ENCODE measurements at regions of chrX and their contacts with region 1.

Region 1: GRCh38 chrX:154748712-154749343 is 2.0 kb downstream of the GAB3 start:
- H3K4me3 Mint-ChIP-seq: peak overlapping the region; percentile 42
- H3K27ac Mint-ChIP-seq: no peak overlapping the region
- H3K4me1 Mint-ChIP-seq: peaks cover 6% of the 10 kb centered on the region
- H3K27me3 Mint-ChIP-seq: no peaks in the 10 kb centered on the region

Region 2: GRCh38 chrX:154428176-154429010 is 320.4 kb before region 1 on chrX and contains the start of gene ATP6AP1:
- intact Hi-C with region 1: no loop called
- H3K4me3 Mint-ChIP-seq: peak within 1 kb of the TSS; percentile 81
- H3K27ac Mint-ChIP-seq: peak within 1 kb of the TSS; percentile 89
- H3K4me1 Mint-ChIP-seq: peaks cover 41% of the 10 kb centered on the region
- H3K27me3 Mint-ChIP-seq: no peaks in the 10 kb centered on the region

Region 3: GRCh38 chrX:154714925-154715324 is 33.9 kb before region 1 on chrX:
- intact Hi-C with region 1: loop called (anchors 5 kb)
- H3K4me3 Mint-ChIP-seq: no peak overlapping the region
- H3K27ac Mint-ChIP-seq: no peak overlapping the region
- H3K4me1 Mint-ChIP-seq: peaks cover 58% of the 10 kb centered on the region
- H3K27me3 Mint-ChIP-seq: no peaks in the 10 kb centered on the region

Region 4: DNA sequence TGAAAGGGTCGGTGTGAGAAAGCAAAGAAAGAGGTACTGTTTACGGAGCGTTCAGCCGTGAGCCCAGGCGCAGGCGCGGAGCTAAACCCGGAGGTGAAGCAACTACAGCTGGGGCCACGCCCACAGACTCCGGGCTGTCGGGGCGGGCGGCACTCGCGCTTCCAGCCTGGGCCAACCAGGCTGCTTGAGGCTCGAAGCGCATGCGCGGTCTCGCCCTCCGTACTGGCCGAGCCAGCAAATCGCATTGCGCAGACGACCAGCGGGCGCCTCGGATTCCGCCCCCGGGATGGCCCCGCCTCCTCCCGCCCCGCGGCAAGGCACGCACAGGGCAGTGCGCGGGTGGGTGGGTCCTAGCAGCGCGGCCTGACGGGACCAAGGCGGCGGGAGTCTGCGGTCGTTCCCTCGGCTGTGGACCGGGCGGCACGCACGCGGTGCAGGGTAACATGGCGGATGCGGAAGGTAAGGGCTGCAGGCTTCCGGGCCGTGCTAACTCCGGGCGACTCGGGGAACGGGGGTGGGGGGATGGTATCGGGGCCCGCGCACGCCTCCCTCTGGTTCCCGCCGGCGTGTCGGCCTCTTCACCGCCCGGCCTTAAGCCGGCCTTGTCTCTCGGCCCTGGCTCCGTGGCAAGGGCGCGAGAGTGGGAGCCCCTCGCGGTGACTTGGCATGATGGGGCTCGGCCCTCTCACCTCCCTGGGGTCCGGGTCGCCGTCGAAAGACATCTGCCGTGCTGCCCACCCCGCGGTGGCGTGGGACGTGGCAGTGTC is 13.9 kb after region 1 on chrX and contains the start of gene DKC1:
- intact Hi-C with region 1: loop called (anchors 1 kb)
- H3K4me3 Mint-ChIP-seq: peak within 1 kb of the TSS; percentile 84
- H3K27ac Mint-ChIP-seq: peak within 1 kb of the TSS; percentile 89
- H3K4me1 Mint-ChIP-seq: peaks cover 9% of the 10 kb centered on the region
- H3K27me3 Mint-ChIP-seq: no peaks in the 10 kb centered on the region

Region 5: DNA sequence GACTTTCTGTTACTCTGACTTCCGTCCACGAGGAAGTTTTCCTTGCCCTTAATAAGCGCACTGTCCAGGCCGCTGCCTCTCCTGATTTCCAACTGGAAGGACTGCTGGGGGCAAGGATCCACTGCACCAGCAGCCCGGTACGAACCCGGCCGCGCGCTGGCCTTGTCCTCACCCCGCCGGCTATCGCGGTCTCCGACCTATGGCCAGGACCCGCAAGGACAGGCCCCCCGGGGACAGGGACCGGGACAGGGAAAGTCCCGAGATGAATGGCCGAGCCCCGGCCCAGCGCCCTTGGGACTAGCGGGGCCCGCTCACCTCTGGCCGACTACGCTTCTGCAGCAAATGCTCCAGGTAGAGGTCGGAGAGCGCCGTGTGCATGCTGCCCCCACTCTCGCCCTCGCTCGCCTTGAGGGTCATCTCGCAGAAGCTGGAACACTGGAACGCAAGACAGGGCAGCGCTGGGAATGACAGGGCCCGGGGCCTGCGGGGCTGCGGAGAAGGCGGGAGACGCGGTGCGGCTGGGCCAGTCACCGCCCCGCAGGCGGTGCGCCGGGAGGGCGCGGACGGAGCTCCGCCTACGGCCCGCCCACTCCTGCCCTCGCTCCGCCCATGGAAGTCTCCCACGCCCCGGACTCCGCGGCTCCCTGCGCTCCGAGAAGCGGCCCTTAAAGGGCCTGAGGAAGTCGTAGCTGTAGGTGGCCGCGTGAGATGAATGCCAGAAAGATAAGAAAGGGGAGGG is 56.3 kb after region 1 on chrX and contains the start of gene MPP1:
- intact Hi-C with region 1: loop called (anchors 10 kb)
- H3K4me3 Mint-ChIP-seq: peak within 1 kb of the TSS; percentile 93
- H3K27ac Mint-ChIP-seq: peak within 1 kb of the TSS; percentile 94
- H3K4me1 Mint-ChIP-seq: peaks cover 10% of the 10 kb centered on the region
- H3K27me3 Mint-ChIP-seq: no peaks in the 10 kb centered on the region

Region 6: GRCh38 chrX:154836163-154836562 is 87.3 kb after region 1 on chrX:
- intact Hi-C with region 1: loop called (anchors 5 kb)
- H3K4me3 Mint-ChIP-seq: no peak overlapping the region
- H3K27ac Mint-ChIP-seq: no peak overlapping the region
- H3K4me1 Mint-ChIP-seq: no peaks in the 10 kb centered on the region
- H3K27me3 Mint-ChIP-seq: no peaks in the 10 kb centered on the region

Measured in dendritic cell treated with granulocyte-macrophage colony-stimulating factor and Interleukin-4, amounts not matched to agents 40 ng/mL and 50 ng/mL, for 4 days (primary cell).